PC-9 (cell line): ENCODE measurements at regions of chr19 and their contacts with region 1.

Region 1: DNA sequence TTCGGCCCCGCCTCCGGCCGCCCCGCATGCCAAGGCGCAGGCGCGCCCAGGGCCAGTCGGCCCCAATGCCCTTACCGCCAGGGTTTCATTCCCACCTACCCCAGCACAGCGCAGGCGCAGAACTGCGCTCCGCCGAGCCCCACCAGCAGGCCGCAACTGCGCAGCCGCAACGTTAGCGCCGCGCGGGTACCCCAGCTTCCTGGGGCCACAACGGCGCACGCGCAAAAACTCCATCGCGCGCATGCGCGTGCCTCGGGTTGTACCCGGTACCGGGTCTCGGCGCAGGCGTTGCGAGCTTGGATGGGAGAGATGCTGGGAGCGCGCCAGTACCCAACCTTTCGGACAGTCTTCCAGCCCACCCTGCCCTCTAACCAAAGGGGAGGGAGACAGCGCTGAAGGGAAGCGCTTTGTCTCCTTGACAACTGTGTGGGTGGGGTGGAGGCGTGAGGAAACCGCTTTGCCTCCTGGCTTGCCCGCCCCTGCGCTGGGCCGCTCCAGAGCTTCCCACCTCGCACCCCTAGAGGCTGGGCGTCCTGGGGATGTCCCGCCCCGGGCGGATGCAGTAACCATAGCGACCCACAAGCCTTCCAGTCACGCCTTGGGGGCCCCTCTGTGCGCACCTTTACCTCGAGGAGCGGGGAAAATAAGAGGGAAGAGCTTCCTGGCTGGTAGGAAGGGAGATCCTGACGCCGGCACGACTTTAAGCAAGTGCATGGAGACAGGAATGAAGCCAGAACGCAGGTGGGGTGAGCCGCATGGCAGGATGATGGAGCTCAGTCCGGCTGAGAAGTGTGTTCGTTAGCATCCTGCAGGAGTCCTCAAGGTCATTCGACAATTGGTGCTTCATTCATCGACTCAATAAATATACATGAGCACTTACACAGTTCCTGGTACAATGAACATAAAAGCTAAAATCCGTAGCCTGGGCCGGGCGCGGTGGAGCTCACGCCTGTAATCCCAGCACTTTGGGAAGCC is 525 bp upstream of the MYPOP start:
- DNase-seq: peak; percentile 94 to 99
- H3K4me3 ChIP-seq: peak overlapping the region; percentile 95
- H3K27ac ChIP-seq: peak overlapping the region; percentile 7
- H3K4me1 ChIP-seq: peaks cover 32% of the 10 kb centered on the region
- H3K27me3 ChIP-seq: no peaks in the 10 kb centered on the region
- CTCF ChIP-seq: no peak

Region 2: GRCh38 chr19:45496349-45496953 is 406.5 kb before region 1 on chr19:
- CTCF ChIA-PET with region 1: no interaction called
- POLR2A ChIA-PET with region 1: interaction called, 14 read pairs
- intact Hi-C with region 1: no loop called
- DNase-seq: peak in 1 of 2 experiments; percentile 45
- H3K4me3 ChIP-seq: peak overlapping the region; percentile 92
- H3K27ac ChIP-seq: no peak overlapping the region
- H3K4me1 ChIP-seq: peaks cover 14% of the 10 kb centered on the region; the same call in 1 of the 2 replicates
- H3K27me3 ChIP-seq: no peaks in the 10 kb centered on the region
- CTCF ChIP-seq: no peak

Region 3: GRCh38 chr19:45809643-45810159 is 93.2 kb before region 1 on chr19:
- CTCF ChIA-PET with region 1: interaction called, 15 read pairs
- POLR2A ChIA-PET with region 1: no interaction called
- intact Hi-C with region 1: no loop called
- DNase-seq: peak; percentile 19 to 58
- H3K4me3 ChIP-seq: no peak overlapping the region
- H3K27ac ChIP-seq: peak overlapping the region; percentile 61
- H3K4me1 ChIP-seq: peaks cover 12% of the 10 kb centered on the region
- H3K27me3 ChIP-seq: no peaks in the 10 kb centered on the region
- CTCF ChIP-seq: no peak

Region 4: DNA sequence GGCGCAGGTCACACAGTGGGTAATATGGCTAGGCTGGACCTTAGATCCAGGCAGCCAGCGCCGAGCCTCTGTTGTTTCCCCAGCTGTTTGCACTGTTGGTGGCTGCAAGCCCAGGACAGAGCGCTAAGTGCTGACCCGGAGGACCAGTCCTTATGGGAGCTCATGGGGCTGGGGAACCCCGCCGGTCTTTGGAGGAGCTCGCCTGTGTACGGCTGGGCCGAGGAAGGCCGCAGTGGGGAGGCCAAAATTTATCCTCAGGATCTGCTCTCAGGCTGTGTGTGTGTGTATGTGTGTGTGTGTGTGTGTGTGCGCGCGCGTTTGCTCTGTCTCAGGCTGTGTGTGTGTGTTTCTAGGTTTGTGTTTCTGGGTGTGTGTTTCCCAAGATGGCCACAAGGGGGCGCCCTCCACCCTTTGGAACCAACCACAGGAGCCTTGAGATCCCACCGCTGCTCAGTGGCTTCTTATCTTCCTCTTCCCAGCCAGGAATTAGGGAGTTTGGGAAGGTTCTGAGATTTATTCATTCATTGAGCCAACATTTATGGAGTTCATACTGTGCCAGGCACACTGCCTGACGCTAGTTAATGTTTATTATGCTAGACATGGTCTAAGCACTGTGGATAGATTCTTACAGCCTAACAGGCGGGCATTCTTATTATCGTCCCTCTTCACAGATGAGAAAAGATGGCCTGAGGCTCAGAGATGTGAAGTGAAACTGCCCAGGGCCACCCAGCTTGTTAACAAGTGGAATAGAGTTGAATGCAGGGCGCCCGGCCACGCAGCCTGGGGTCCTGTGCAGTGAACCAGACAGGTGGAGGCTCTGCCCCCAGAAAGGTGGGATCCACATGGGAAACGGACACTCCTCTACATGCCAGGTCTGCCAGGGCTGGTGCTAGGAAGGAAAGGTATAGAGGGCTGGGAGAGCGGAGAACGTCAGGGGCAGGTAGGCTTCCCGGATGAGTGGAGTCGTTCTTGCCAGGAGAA is 106.9 kb after region 1 on chr19:
- CTCF ChIA-PET with region 1: interaction called, 13 read pairs
- POLR2A ChIA-PET with region 1: no interaction called
- intact Hi-C with region 1: no loop called
- DNase-seq: peak; percentile 52 to 61
- H3K4me3 ChIP-seq: no peak overlapping the region
- H3K27ac ChIP-seq: no peak overlapping the region
- H3K4me1 ChIP-seq: 0 out of 2 replicates have a peak, but pooled peaks cover 7% of the 10 kb centered on the region
- H3K27me3 ChIP-seq: no peaks in the 10 kb centered on the region
- CTCF ChIP-seq: peak; percentile 98

Region 5: GRCh38 chr19:46076951-46077816 is 174.2 kb after region 1 on chr19:
- CTCF ChIA-PET with region 1: no interaction called
- POLR2A ChIA-PET with region 1: no interaction called
- intact Hi-C with region 1: no loop called
- DNase-seq: peak; percentile 73 to 74
- H3K4me3 ChIP-seq: peak overlapping the region; percentile 55
- H3K27ac ChIP-seq: no peak overlapping the region
- H3K4me1 ChIP-seq: peaks cover 38% of the 10 kb centered on the region
- H3K27me3 ChIP-seq: no peaks in the 10 kb centered on the region
- CTCF ChIP-seq: peak; percentile 99